SK-N-SH (cell line): ENCODE measurements at regions of chr7 and their contacts with region 1.

Region 1: DNA sequence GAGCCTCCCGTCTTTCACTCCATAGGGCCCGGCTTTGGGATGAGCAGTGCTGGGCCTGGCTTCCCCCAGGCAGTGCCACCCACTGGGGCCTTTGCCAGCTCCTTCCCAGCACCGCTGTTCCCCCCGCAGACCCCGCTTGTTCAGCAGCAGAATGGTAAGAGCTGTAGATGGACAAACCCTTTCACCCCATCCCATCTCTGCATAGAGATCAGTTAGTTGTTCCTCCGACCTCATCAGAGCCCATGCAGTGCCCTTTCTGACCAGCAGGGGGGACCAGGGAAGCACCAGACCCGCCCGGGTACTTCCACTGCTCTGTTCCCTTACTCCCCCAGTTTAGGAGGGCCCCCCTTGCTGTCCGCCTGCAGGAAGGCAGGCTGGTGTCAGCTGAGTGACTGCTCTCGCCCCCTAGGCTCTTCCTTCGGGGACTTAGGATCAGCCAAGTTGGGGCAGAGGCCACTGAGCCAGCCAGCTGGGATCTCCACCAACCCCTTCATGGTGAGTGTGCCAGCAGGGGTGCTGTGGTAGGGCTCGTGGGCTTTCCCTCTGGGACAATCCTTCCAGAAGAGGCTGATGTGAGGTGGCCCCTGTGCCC is 9.8 kb downstream of the SAP25 start:
- DNase-seq: peak; percentile 95
- H3K4me3 ChIP-seq: no peak overlapping the region; a peak in 1 of 4 replicates
- H3K27ac ChIP-seq: no peak overlapping the region; a peak in 1 of 4 replicates
- H3K4me1 ChIP-seq: peaks cover 0 to 24% of the 10 kb centered on the region in 2 experiments; a peak in 1 of 4 replicates
- H3K27me3 ChIP-seq: no peaks in the 10 kb centered on the region
- CTCF ChIP-seq: peak; percentile 98
- EP300 ChIP-seq: no peak
- RAD21 ChIP-seq: peak; percentile 84

Region 2: GRCh38 chr7:100496509-100496908 is 67.4 kb before region 1 on chr7:
- CTCF ChIA-PET with region 1: interaction called, 151 read pairs
- POLR2A ChIA-PET with region 1: no interaction called
- DNase-seq: no peak
- H3K4me3 ChIP-seq: no peak overlapping the region
- H3K27ac ChIP-seq: no peak overlapping the region
- H3K4me1 ChIP-seq: no peaks in the 10 kb centered on the region
- H3K27me3 ChIP-seq: no peaks in the 10 kb centered on the region
- CTCF ChIP-seq: no peak
- EP300 ChIP-seq: no peak
- RAD21 ChIP-seq: no peak

Region 3: DNA sequence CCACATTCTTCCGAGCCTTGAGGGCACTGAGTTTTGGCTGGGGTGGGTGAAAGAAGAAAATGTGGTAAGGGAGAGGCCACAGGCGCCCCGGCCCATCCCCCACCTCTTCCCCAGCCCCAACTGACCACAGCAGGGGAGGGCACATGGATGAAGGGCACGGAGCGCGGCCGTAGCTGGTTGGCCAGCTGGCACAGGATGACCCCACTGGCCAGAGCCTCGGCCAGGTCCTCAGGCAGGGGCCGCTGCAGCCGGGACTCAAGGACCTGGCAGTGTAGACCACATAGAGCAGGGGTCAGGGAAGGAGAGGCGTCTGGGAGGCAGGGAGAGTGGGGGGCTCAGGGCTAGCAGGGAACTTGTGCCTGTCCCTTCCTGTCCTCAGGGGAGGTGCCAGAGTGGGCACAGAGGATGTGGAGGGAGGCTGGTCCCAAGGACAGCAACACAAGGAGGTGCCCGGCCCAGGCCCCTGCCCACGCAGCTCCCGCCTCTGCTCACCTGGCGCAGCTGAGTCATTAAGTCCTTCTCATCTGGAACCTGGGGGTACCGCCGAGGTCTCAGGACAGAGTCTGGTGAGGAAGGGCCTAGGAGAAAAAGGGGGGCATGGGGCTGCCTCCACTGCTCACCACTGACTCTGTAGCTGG is 12.0 kb after region 1 on chr7:
- CTCF ChIA-PET with region 1: interaction called, 149 read pairs
- POLR2A ChIA-PET with region 1: no interaction called
- DNase-seq: peak; percentile 24
- H3K4me3 ChIP-seq: no peak overlapping the region
- H3K27ac ChIP-seq: no peak overlapping the region
- H3K4me1 ChIP-seq: peaks cover 0 to 4% of the 10 kb centered on the region in 2 experiments; a peak in 1 of 4 replicates
- H3K27me3 ChIP-seq: no peaks in the 10 kb centered on the region
- CTCF ChIP-seq: no peak
- EP300 ChIP-seq: no peak
- RAD21 ChIP-seq: no peak

Region 4: GRCh38 chr7:100604028-100604975 is 40.4 kb after region 1 on chr7:
- CTCF ChIA-PET with region 1: interaction called, 30 read pairs
- POLR2A ChIA-PET with region 1: interaction called, 5 read pairs
- DNase-seq: peak; percentile 98
- H3K4me3 ChIP-seq: peak overlapping the region; percentile 67 to 76
- H3K27ac ChIP-seq: peak overlapping the region; percentile 69 to 97
- H3K4me1 ChIP-seq: peaks cover 10 to 25% of the 10 kb centered on the region in 2 experiments; a peak in 3 of 4 replicates
- H3K27me3 ChIP-seq: no peaks in the 10 kb centered on the region
- CTCF ChIP-seq: peak; percentile 59
- EP300 ChIP-seq: peak in 1 of 2 experiments; percentile 39; a peak in 1 of 4 replicates
- RAD21 ChIP-seq: no peak

Region 5: DNA sequence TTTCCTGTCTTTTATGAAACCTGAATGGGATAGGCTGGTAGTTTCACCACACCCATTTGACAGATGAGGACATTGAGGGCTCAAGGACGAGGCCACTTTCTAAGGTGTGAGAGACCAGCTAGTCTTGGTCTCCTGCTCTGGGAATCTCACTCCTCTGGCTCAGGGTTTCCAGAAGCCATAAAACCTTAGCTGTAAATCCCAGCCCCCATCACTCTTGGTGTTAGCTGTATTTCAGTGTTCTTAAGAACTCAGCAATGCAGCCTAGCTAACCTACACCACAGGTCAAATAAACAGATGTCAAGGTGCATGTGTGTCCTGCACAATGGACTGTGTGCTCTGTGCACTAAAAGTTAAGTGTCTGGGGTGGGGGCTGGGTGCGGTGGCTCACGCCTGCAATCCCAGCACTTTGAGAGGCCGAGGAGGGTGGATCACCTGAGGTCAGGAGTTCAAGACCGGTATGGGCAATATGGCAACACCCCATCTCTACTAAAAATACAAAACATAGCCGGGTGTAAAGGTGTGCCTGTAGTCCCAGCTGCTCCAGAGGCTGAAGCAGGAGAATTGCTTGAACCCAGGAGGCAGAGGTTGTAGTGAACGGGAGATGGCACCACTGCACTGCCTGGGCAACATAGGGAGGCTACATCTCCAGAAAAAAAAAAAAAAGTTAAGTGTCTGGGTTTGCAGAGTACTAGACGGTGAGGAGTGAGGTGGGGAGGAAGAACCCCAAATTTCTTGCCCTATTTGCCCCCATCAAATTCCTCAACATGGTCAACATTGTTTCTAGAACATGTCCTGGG is 155.8 kb after region 1 on chr7:
- CTCF ChIA-PET with region 1: interaction called, 34 read pairs
- POLR2A ChIA-PET with region 1: no interaction called
- DNase-seq: no peak
- H3K4me3 ChIP-seq: 0 out of 4 replicates have a peak overlapping the region, but pooled peaks of 1 of the 2 experiments have one; percentile 29
- H3K27ac ChIP-seq: no peak overlapping the region
- H3K4me1 ChIP-seq: peaks cover 0 to 3% of the 10 kb centered on the region in 2 experiments; a peak in 1 of 4 replicates
- H3K27me3 ChIP-seq: peaks cover 28% of the 10 kb centered on the region
- CTCF ChIP-seq: peak; percentile 47
- EP300 ChIP-seq: no peak
- RAD21 ChIP-seq: peak; percentile 56